ENCODE measurements at regions of chr2 and their contacts with region 1.

Region 1: DNA sequence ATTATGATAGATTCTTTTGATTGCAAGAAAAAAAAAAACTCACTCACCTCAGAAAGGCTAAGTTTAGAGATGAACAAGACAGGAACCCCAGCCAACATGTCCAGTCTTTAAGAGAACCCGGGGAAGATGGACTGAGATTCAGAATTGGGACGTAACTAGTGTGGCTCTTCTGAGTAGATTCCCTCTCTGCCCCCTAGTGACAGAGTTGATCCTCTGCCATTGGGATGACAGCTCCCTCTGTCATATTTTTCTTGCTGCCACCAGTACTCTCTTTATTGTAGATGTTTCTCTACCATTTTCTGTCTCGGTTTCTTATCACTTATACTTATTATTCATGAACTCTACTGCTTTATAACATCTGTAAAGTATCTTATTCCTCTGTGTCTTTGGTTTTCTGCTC is 77.7 kb downstream of the GULP1 start:
- DNase-seq: no peak
- H3K4me3 ChIP-seq: no peak overlapping the region
- H3K27ac ChIP-seq: no peak overlapping the region
- H3K4me1 ChIP-seq: no peaks in the 10 kb centered on the region
- H3K27me3 ChIP-seq: no peaks in the 10 kb centered on the region
- CTCF ChIP-seq: peak; percentile 62

Region 2: GRCh38 chr2:187939180-187939579 is 430.2 kb before region 1 on chr2:
- CTCF ChIA-PET with region 1: interaction called, 10 read pairs
- POLR2A ChIA-PET with region 1: no interaction called
- intact Hi-C with region 1: no loop called
- DNase-seq: no peak
- H3K4me3 ChIP-seq: no peak overlapping the region
- H3K27ac ChIP-seq: no peak overlapping the region
- H3K4me1 ChIP-seq: no peaks in the 10 kb centered on the region
- H3K27me3 ChIP-seq: no peaks in the 10 kb centered on the region
- CTCF ChIP-seq: no peak

Region 3: GRCh38 chr2:188219541-188219940 is 149.8 kb before region 1 on chr2:
- CTCF ChIA-PET with region 1: no interaction called
- POLR2A ChIA-PET with region 1: interaction called, 12 read pairs
- intact Hi-C with region 1: no loop called
- DNase-seq: no peak
- H3K4me3 ChIP-seq: no peak overlapping the region
- H3K27ac ChIP-seq: no peak overlapping the region
- H3K4me1 ChIP-seq: no peaks in the 10 kb centered on the region
- H3K27me3 ChIP-seq: no peaks in the 10 kb centered on the region
- CTCF ChIP-seq: no peak

Measured in PC-9 (cell line).